PC-3 (cell line): ENCODE measurements at regions of chr11 and their contacts with region 1.

Region 1: GRCh38 chr11:61871158-61871597 is 20.2 kb downstream of the FADS3 start:
- DNase-seq: peak; percentile 87
- ATAC-seq: peak; percentile 93
- H3K4me3 ChIP-seq: peak overlapping the region; percentile 48
- H3K27ac ChIP-seq: no peak overlapping the region
- H3K4me1 ChIP-seq: peaks cover 3% of the 10 kb centered on the region; the same call in 1 of the 2 replicates
- H3K27me3 ChIP-seq: no peaks in the 10 kb centered on the region
- CTCF ChIP-seq: peak; percentile 97

Region 2: GRCh38 chr11:61756452-61757212 is 114.5 kb before region 1 on chr11:
- CTCF ChIA-PET with region 1: no interaction called
- POLR2A ChIA-PET with region 1: no interaction called
- intact Hi-C with region 1: no loop called
- DNase-seq: peak; percentile 65
- ATAC-seq: peak; percentile 61
- H3K4me3 ChIP-seq: no peak overlapping the region
- H3K27ac ChIP-seq: peak overlapping the region; percentile 51
- H3K4me1 ChIP-seq: peaks cover 20% of the 10 kb centered on the region
- H3K27me3 ChIP-seq: no peaks in the 10 kb centered on the region
- CTCF ChIP-seq: no peak

Region 3: DNA sequence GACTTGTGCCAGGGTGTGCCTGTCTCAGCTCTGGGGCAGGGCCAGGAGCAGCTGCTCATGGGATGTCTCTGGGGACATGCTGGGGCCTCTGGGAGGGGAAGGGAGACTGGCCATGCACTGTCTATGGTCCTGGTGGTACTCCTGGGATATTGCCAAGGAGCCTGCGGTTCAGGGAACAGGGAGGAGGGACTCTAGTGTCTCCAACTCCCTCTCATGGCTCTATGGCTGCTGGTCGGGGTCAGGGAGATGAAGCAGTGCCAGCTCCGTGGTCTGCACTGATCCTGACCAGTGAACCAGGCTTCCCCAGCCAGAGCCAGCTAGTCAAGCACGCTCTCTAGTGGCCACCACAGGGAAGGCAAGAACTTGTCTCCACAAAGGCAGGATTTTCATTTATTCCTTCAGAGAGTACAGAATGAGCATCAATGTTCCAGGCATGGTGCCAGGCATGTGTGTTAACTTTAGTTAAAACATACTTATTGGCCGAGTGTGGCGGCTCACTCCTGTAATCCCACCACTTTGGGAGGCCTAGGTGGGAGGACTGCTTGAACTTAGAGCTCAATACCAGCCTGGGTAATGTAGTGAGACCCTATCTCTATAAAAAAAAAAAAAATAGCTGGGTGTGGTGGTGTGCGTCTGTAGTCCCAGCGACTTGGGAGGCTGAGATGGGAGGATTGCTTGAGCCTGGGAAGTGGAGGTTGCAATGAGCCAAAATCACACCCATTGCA is 76.5 kb after region 1 on chr11:
- CTCF ChIA-PET with region 1: interaction called, 10 read pairs
- POLR2A ChIA-PET with region 1: no interaction called
- intact Hi-C with region 1: loop called (anchors 2 kb)
- DNase-seq: peak; percentile 92
- ATAC-seq: peak; percentile 85
- H3K4me3 ChIP-seq: no peak overlapping the region
- H3K27ac ChIP-seq: no peak overlapping the region
- H3K4me1 ChIP-seq: peaks cover 7% of the 10 kb centered on the region; the same call in 1 of the 2 replicates
- H3K27me3 ChIP-seq: no peaks in the 10 kb centered on the region
- CTCF ChIP-seq: peak; percentile 97

Region 4: DNA sequence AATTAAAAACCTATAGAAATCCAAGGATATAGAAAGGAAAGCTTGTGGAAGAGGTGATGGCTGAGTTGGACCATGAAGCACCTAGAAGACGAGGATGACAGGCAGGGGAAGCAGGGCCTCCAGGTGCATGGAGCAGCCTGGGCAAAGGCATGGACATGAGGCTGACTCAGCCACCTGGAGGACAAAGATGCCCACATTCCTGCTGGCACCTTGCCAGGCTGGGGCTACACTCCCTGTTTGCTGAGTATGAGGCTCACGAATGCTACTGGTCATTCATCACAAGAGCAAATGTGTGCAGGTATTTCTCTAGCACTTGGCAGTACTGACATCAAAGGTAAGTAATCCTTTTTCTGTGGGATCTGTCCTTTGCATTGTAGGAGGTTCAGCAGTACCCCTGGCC is 330.2 kb after region 1 on chr11:
- CTCF ChIA-PET with region 1: no interaction called
- POLR2A ChIA-PET with region 1: no interaction called
- intact Hi-C with region 1: loop called (anchors 10 kb)
- DNase-seq: peak; percentile 68
- ATAC-seq: no peak
- H3K4me3 ChIP-seq: no peak overlapping the region
- H3K27ac ChIP-seq: no peak overlapping the region
- H3K4me1 ChIP-seq: no peaks in the 10 kb centered on the region
- H3K27me3 ChIP-seq: peaks cover 82% of the 10 kb centered on the region
- CTCF ChIP-seq: no peak